Dendritic cell treated with granulocyte-macrophage colony-stimulating factor and Interleukin-4, amounts not matched to agents 40 ng/mL and 50 ng/mL, for 4 days (primary cell): ENCODE measurements at regions of chr7 and their contacts with region 1.

Region 1: GRCh38 chr7:100563809-100564400 is 9.8 kb downstream of the SAP25 start:
- H3K4me3 Mint-ChIP-seq: no peak overlapping the region
- H3K27ac Mint-ChIP-seq: no peak overlapping the region
- H3K4me1 Mint-ChIP-seq: peaks cover 13% of the 10 kb centered on the region
- H3K27me3 Mint-ChIP-seq: peaks cover 7% of the 10 kb centered on the region

Region 2: GRCh38 chr7:100469227-100470044 is 94.5 kb before region 1 on chr7:
- intact Hi-C with region 1: loop called (anchors 1 kb)
- H3K4me3 Mint-ChIP-seq: peak overlapping the region; percentile 34
- H3K27ac Mint-ChIP-seq: no peak overlapping the region
- H3K4me1 Mint-ChIP-seq: peaks cover 74% of the 10 kb centered on the region
- H3K27me3 Mint-ChIP-seq: no peaks in the 10 kb centered on the region

Region 3: GRCh38 chr7:100586266-100587025 is 22.5 kb after region 1 on chr7 and contains the start of gene FBXO24:
- intact Hi-C with region 1: loop called (anchors 1 kb)
- H3K4me3 Mint-ChIP-seq: peak within 1 kb of the TSS; percentile 95
- H3K27ac Mint-ChIP-seq: peak within 1 kb of the TSS; percentile 90
- H3K4me1 Mint-ChIP-seq: peaks cover 59% of the 10 kb centered on the region
- H3K27me3 Mint-ChIP-seq: peaks cover 18% of the 10 kb centered on the region

Region 4: GRCh38 chr7:100691676-100692577 is 128.0 kb after region 1 on chr7:
- intact Hi-C with region 1: loop called (anchors 5 kb)
- H3K4me3 Mint-ChIP-seq: peak overlapping the region; percentile 98
- H3K27ac Mint-ChIP-seq: no peak overlapping the region
- H3K4me1 Mint-ChIP-seq: peaks cover 51% of the 10 kb centered on the region
- H3K27me3 Mint-ChIP-seq: peaks cover 12% of the 10 kb centered on the region

Region 5: DNA sequence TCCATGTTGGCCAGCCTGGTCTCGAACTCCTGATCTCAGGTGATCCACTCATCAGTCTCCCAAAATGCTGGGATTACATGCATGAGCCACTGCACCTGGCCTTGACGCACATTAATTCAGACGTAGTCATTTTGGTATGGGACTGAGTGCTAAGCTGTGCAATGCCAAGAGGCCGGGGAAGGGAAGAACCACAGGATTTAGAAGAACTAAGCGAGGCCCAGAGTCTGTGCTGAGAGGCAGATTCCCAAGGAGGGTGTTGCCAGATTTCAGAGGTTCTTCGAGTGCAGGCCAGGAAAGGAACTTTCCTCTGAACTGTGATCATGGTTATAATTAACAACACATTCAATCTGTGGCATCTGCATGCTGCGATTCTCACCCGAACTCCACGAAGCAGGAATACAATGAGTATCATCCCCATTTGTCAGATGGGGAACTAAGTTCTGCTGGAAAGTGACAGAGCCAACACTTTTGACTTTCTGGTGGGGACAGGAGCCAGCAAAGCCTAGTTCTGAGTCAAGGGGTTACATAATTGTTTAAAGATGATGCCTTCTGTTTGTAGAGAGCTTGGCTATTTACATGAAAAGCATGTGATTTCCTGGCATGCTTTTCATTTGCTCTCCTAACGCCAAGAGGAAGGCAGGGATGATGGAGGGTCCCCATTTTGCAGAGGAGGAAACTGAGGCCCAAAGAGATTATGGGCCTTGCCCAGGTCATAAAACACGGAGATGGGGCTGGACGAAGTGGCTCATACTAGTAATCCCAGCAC is 163.3 kb after region 1 on chr7:
- intact Hi-C with region 1: loop called (anchors 2 kb)
- H3K4me3 Mint-ChIP-seq: no peak overlapping the region
- H3K27ac Mint-ChIP-seq: no peak overlapping the region
- H3K4me1 Mint-ChIP-seq: peaks cover 12% of the 10 kb centered on the region
- H3K27me3 Mint-ChIP-seq: peaks cover 48% of the 10 kb centered on the region